Posterior cingulate gyrus (tissue), 11 donors: ENCODE measurements at regions of chr11 and their contacts with region 1.

Region 1: GRCh38 chr11:46222490-46223251 is 54.8 kb upstream of the CREB3L1 start:
- DNase-seq: no peak

Region 2: DNA sequence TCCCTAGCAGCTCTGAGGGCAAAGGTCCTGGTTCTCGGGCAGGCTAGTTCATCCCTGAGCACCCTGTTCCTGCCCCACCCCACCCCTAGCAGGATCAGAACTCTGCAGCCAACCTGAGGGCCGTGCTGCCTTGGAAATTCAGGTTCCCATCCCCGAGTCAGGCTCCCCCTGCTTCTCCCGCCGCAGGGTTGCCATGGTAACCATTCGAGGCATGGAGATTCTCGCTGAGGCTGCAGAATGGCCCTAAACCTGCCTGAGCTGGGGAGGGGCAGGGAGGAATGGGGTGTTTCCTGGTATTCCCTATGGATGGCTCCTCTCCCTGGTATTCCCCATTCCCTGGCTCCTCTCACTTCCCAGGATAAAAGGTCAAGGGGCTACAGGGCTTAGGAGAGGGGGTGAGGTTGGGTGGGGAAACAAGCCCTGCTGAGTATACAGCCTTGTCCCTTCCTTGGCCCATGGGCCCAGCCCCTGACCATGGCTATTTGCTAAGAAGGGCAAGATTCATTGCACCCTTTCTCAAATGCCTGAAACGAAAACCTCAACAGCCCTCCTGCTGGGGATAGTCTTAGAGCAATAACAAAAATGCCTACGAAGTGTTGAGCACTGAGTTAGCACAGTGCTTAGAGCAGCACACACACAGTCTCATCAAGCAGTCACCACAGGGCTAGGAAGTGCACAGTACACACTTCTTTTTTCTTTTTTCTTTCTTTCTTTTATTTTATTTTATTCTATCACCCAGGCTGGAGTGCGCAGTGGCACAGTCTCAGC is 616.0 kb before region 1 on chr11:
- intact Hi-C with region 1: no loop called
- DNase-seq: peak; percentile 18 to 95 (median 62)

Region 3: DNA sequence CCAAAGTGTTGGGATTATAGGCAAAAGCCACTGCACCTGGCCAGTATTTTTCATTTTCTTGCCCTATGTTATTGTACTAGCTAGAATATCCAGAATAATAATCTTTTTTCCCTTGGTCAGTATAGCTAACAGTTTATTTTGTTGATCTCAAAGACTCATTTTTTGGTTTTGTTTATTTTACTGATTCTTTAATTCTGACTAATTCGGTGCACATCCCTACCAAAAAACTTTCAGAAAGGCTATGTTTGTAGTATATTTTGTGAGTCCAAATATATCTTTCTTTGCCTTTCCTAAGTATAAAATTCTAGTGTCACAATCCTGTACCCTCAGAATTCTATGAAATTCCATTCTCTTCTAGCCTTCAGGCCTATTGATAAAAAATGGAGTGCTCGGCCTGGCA is 185.7 kb before region 1 on chr11:
- intact Hi-C with region 1: no loop called
- DNase-seq: no peak

Region 4: DNA sequence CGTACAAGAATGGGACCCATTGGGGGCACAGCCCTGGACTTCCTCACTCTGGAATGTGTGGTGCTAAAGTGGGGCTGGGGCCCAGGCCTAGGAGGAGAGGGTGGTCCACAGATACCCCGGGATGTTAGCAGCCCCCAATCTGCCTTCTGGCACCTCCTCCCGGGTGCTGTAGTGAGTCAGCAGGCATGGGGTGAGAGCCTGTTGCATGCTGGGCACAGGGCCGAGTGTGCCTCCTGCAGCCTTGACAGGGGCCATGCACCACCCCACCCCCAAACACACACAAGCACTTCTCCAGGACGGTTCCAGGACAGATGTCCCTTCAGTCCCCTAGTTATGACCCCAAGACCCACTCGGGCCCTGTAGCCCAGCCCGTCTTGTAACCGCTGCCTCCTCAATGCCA is 77.9 kb before region 1 on chr11:
- intact Hi-C with region 1: loop called (anchors 5 kb)
- DNase-seq: no peak

Region 5: DNA sequence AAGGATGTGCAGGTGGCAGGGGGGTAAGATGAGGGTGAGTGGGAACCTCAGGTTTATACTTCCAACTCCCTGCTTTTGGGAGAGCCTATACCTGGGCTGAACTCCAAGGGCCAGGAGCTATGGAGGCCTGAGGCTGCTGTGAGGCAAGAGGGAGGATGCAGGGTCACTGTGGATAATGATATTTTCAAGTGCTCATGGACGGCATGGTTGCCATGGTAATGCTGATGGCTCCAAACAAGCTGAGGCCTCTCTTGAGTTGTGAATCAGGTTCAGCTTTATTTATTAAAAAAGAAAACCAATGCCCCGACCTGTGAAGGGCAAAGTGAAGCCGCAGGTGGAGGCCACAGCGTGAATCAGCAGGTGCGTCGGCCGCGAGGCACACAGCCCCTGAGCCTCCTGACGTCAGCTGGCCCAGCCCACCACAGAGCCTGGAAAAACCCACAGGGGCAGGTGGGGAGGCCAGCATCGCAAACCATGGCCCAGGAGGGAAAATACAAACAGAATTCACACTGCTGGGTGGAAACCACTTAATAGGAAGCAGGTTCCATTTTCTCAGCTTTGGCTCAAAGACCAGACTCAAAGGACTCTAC is 37.4 kb after region 1 on chr11:
- intact Hi-C with region 1: no loop called
- DNase-seq: no peak

Region 6: DNA sequence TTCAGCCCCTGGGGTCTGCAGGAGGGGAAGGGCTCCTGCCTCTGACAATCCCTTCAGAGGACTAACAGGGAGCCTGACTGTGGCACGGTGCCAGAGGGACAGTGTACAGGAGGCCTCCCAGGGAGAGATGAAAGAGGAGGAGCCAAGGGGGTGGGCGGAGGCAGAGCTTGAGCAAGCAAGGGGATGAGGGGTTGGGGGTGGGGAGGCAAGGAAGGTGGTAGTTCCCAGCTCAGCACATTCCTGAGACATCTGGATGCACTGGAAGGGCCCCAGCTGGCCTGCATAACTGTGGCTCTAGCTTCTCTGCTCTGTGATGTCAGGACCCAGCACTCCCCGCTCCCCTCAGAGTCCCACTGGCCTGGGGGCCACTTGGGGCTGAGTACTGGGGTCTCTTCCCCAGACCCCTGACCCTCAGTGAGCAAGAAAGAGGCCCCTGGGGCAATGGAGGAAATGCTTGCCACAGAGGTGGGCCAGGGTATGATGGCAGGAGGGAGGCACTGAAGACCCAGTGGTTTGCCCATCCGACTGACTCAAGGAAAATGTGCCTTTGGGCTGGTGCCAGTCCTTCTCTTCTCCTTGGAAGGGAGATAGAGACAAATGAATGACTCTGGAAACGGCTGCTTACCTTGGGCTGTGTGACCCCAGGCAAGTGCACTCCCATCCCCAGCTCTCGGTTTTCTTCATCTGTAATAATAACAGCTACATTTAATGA is 68.1 kb after region 1 on chr11:
- intact Hi-C with region 1: no loop called
- DNase-seq: peak in 1 of 10 donors; percentile 82